ENCODE measurements at regions of chr11 and their contacts with region 1.

Region 1: DNA sequence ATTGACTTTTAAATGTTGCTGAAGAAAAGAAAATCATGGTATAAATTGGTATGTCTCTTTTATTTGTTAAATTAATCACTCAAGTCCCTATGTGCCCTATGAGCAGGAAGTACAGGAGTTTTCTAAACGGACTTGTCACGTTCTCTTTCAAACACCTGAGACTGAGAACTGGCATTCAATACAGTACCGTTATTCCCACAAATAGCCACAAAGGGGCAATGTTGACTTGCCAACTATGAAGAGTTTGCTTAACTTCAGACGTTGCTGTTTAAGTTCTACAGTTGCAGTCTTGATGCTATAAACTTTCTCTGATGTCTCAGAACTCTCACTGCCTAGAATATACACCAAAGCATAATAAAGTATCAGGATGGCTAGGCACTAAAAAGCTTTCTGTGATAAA is 7.6 kb downstream of the OR56A1 start:
- DNase-seq: peak in 1 of 5 donors; percentile 20
- ATAC-seq: peak in 3 of 4 donors; percentile 62 to 82 (median 81)
- H3K4me3 ChIP-seq: no peak overlapping the region
- H3K27ac ChIP-seq: no peak overlapping the region
- H3K4me1 ChIP-seq: no peaks in the 10 kb centered on the region
- H3K27me3 ChIP-seq: no peaks in the 10 kb centered on the region
- CTCF ChIP-seq: peak; percentile 40 to 77 (median 64)
- POLR2A ChIP-seq: no peak

Region 2: GRCh38 chr11:6251120-6251733 is 228.3 kb after region 1 on chr11:
- intact Hi-C with region 1: loop called in 1 of 10 experiments (anchors 10 kb)
- DNase-seq: peak; percentile 49 to 72 (median 59)
- ATAC-seq: peak; percentile 83 to 94 (median 88)
- H3K4me3 ChIP-seq: no peak overlapping the region
- H3K27ac ChIP-seq: peak overlapping the region in 4 of 12 donors; percentile 9 to 70 (median 30)
- H3K4me1 ChIP-seq: peaks cover 0 to 23% (median 2%) of the 10 kb centered on the region in 12 donors
- H3K27me3 ChIP-seq: peaks cover 0 to 14% (median 0%) of the 10 kb centered on the region in 9 donors
- CTCF ChIP-seq: peak; percentile 63 to 87 (median 80)
- POLR2A ChIP-seq: no peak

Region 3: DNA sequence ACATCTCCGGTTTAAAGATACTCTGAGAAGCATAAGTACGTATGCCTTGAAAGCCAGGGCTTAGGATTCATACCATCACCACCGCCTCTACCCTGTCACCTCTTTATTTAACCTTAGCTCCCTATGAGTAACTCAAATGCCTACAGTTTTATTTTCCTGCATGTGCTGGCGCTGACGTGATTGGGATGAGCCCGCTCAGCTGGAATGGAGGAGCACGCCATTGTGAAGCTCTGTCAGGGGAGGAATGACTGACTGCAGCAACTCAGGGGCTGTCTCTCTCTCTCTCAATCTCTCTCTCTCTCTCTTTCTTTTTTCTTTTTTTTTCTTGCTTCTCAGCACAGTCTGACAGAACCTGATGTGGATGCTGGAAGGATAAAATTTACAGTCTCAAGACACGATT is 284.9 kb after region 1 on chr11:
- intact Hi-C with region 1: loop called in 5 of 10 experiments (anchors 5 to 10 kb)
- DNase-seq: no peak
- ATAC-seq: no peak
- H3K4me3 ChIP-seq: no peak overlapping the region
- H3K27ac ChIP-seq: no peak overlapping the region
- H3K4me1 ChIP-seq: no peaks in the 10 kb centered on the region
- H3K27me3 ChIP-seq: peaks cover 0 to 7% (median 0%) of the 10 kb centered on the region in 9 donors
- CTCF ChIP-seq: no peak
- POLR2A ChIP-seq: no peak

Region 4: DNA sequence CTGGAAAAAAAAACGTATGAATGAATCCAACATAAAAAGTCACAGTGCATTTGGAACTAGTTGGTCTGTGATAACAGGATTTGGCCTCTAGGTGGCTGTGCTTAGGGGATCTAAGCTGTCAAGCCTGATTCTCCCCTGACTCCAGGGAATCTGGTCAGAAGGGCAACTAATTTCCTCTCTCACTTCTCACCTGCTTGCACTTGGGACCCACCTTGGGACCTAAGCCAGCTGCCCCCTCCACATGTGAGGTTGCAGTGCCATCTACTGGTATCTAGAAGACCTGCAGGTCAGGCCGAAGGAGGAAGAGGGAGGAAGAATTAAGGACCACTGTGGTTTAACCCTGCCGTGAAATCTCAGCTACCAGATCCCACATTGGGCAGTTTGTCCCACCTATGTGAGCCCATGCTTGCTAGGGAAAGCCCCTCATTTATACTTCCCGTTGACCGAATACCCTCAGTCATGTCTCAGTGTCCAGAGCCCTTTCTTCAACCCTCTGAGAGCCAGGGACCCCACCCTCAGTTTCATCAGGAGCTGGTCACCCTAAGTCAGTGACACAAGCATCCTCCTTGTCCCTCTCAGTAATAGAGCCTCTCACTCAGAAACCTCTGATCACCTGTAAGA is 330.5 kb after region 1 on chr11:
- intact Hi-C with region 1: loop called in 9 of 10 experiments (anchors 2 to 5 kb)
- DNase-seq: peak in 4 of 5 donors; percentile 35 to 44 (median 41)
- ATAC-seq: peak in 3 of 4 donors; percentile 42 to 64 (median 58)
- H3K4me3 ChIP-seq: no peak overlapping the region
- H3K27ac ChIP-seq: no peak overlapping the region
- H3K4me1 ChIP-seq: peaks cover 0 to 9% (median 0%) of the 10 kb centered on the region in 12 donors
- H3K27me3 ChIP-seq: no peaks in the 10 kb centered on the region
- CTCF ChIP-seq: peak; percentile 90 to 99 (median 96)
- POLR2A ChIP-seq: no peak

Region 5: DNA sequence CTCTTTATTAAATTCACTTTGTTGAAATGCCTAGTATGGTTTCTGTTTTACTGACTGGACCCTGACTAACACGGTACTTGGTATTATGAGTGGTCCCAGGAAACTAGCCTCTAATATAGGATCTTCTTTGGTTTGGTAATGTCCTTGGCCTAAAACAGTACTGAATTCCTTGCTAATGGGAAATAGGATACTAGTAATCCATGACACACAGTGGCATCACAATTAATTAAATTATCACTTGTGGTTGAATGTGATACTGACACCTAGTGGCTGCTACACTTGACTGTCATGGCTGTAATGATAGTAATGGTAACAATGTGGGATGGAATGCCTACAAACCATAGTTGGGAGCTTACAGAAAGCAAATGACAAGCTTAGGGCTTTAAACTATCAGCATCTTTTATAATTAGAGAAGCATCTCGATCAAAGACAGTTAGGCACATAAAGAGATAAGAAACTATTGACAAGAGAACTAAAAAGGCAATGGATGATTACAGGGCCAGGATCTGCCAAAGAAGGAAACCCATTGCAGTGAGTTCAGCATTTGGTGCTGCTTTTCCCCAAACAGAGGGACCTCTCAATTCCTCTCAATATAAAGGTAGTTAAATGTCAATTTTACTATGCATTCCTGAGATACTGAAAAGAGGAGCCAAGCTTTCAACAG is 482.8 kb after region 1 on chr11:
- intact Hi-C with region 1: loop called in 1 of 10 experiments (anchors 10 kb)
- DNase-seq: no peak
- ATAC-seq: peak in 3 of 4 donors; percentile 64 to 72 (median 66)
- H3K4me3 ChIP-seq: no peak overlapping the region
- H3K27ac ChIP-seq: no peak overlapping the region
- H3K4me1 ChIP-seq: no peaks in the 10 kb centered on the region
- H3K27me3 ChIP-seq: no peaks in the 10 kb centered on the region
- CTCF ChIP-seq: peak; percentile 60 to 83 (median 75)
- POLR2A ChIP-seq: no peak

Measured in heart left ventricle (tissue), 16 donors.